ENCODE measurements at regions of chr21 and their contacts with region 1.

Region 1: GRCh38 chr21:46392921-46393320 is 65.8 kb upstream of the DIP2A start:
- DNase-seq: peak in 1 of 2 donors; percentile 59
- H3K4me3 ChIP-seq: no peak overlapping the region
- H3K27ac ChIP-seq: peak overlapping the region in 1 of 5 donors; percentile 34
- H3K4me1 ChIP-seq: peaks cover 12 to 18% (median 14%) of the 10 kb centered on the region in 4 donors
- H3K27me3 ChIP-seq: no peaks in the 10 kb centered on the region
- CTCF ChIP-seq: no peak
- EP300 ChIP-seq: no peak
- POLR2A ChIP-seq: no peak

Region 2: GRCh38 chr21:45551316-45551715 is 841.6 kb before region 1 on chr21:
- intact Hi-C with region 1: no loop called
- DNase-seq: peak in 1 of 2 donors; percentile 68
- H3K4me3 ChIP-seq: no peak overlapping the region
- H3K27ac ChIP-seq: peak overlapping the region in 4 of 5 donors; percentile 44 to 84 (median 62)
- H3K4me1 ChIP-seq: peaks cover 6 to 36% (median 21%) of the 10 kb centered on the region in 4 donors
- H3K27me3 ChIP-seq: peaks cover 0 to 21% (median 0%) of the 10 kb centered on the region in 3 donors
- CTCF ChIP-seq: no peak
- EP300 ChIP-seq: no peak
- POLR2A ChIP-seq: no peak

Region 3: DNA sequence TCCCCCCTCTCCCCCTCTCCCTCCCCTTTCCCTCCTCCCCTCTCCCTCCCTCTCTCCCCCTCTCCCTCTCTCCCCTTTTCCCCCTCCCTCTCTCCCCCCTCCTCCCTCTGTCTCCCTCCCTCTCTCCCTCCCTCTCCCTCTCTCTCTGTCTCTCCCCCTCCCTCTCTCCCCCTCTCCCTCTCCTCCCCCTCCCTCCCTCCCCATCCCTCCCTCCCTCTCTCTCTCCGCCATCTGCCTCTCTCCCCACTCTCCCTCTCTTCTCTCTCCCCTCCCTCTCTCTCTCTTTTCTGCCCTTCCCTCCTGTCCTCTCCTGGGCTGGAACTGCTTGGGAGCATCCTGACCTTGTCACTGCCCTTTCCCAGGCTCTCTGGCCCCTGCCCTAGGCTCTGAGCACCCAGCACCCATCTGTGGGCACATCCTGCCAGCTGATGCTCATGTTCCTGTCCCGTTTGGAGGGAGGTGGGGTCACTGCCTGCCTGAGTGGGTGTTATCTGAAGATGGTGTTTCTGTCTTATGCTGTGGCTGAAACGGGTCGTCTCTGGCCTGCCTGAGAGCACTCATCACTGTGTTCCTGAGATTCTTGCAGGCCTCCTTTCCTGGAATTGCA is 248.4 kb before region 1 on chr21:
- intact Hi-C with region 1: no loop called
- DNase-seq: no peak
- H3K4me3 ChIP-seq: no peak overlapping the region
- H3K27ac ChIP-seq: peak overlapping the region in 1 of 5 donors; percentile 83
- H3K4me1 ChIP-seq: peaks cover 0 to 13% (median 9%) of the 10 kb centered on the region in 4 donors
- H3K27me3 ChIP-seq: peaks cover 0 to 14% (median 6%) of the 10 kb centered on the region in 3 donors
- CTCF ChIP-seq: no peak
- EP300 ChIP-seq: no peak
- POLR2A ChIP-seq: no peak

Region 4: GRCh38 chr21:46334351-46335140 is 58.4 kb before region 1 on chr21:
- intact Hi-C with region 1: loop called (anchors 10 kb)
- DNase-seq: no peak
- H3K4me3 ChIP-seq: no peak overlapping the region
- H3K27ac ChIP-seq: no peak overlapping the region
- H3K4me1 ChIP-seq: no peaks in the 10 kb centered on the region
- H3K27me3 ChIP-seq: no peaks in the 10 kb centered on the region
- CTCF ChIP-seq: no peak
- EP300 ChIP-seq: no peak
- POLR2A ChIP-seq: no peak

Measured in stomach (tissue), 19 donors.